ENCODE measurements at regions of chr12 and their contacts with region 1.

Region 1: GRCh38 chr12:95815635-95816212 is 25.2 kb upstream of the NTN4 start:
- DNase-seq: peak; percentile 56
- CTCF ChIP-seq: peak; percentile 35

Region 2: DNA sequence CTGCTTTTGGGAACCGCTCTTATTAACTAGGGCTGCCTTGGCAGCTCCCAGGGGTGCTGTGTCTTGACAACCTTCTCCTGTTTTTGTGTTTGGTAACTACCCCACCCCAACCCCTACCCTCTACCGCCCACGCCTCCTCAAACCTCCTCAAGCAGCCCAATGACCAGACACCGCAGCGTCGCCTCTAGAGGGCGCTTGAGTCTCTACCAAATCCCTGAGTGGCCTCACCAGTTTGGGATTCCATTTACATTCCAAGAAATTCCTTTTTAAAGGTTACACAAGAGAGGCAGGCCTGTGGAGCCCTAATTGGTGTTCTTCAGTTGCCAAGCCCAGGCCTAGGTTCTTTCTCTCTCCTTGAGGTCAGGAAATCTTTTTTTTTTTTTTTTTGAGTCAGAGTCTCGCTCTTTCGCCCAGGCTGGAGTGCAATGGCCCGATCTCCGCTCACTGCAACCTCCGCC is 192.1 kb before region 1 on chr12:
- in situ Hi-C with region 1: loop called (anchors 10 kb)
- DNase-seq: peak; percentile 62
- CTCF ChIP-seq: peak; percentile 71